ENCODE measurements at regions of chr4 and their contacts with region 1.

Region 1: GRCh38 chr4:22688236-22688635 is 4.5 kb upstream of the GBA3 start:
- DNase-seq: peak; percentile 43
- H3K4me3 ChIP-seq: no peak overlapping the region
- H3K27ac ChIP-seq: no peak overlapping the region
- H3K4me1 ChIP-seq: peaks cover 5% of the 10 kb centered on the region
- H3K27me3 ChIP-seq: no peaks in the 10 kb centered on the region
- CTCF ChIP-seq: no peak

Region 2: GRCh38 chr4:21780158-21780557 is 908.1 kb before region 1 on chr4:
- CTCF ChIA-PET with region 1: no interaction called
- dilution Hi-C with region 1: no loop called
- in situ Hi-C with region 1: loop called in 1 of 2 experiments (anchors 10 kb)
- intact Hi-C with region 1: no loop called
- DNase-seq: peak; percentile 40
- H3K4me3 ChIP-seq: no peak overlapping the region
- H3K27ac ChIP-seq: no peak overlapping the region
- H3K4me1 ChIP-seq: no peaks in the 10 kb centered on the region
- H3K27me3 ChIP-seq: no peaks in the 10 kb centered on the region
- CTCF ChIP-seq: no peak

Region 3: DNA sequence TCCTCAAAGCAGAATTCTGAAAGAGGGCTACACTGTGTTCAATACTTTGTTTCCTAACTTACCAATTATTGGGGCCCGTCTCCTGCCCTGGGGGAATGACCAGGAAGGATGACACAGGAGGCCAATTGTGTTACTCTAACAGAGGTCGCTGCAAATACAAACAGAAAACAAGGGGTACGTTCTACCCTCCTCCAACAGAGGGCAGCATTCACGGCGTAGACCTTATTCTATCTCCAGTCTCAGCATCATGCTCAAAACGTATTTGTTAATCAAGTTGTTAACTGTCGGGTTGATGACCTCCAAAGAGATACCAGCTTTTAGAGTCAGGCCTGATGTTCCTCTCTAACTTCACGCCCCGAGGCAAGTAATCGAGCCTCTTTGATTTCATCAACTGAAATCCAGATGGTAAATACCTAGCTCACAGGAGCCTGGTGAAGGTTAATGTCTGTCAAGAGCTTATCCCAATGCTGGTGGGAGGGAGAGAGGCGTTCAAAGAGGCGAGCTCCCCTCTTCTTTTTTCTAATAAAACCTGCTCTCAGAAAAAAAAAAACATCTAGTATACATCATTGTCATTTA is 558.7 kb before region 1 on chr4:
- CTCF ChIA-PET with region 1: no interaction called
- dilution Hi-C with region 1: no loop called
- in situ Hi-C with region 1: no loop called
- intact Hi-C with region 1: loop called (anchors 5 kb)
- DNase-seq: peak; percentile 41
- H3K4me3 ChIP-seq: no peak overlapping the region
- H3K27ac ChIP-seq: no peak overlapping the region
- H3K4me1 ChIP-seq: no peaks in the 10 kb centered on the region
- H3K27me3 ChIP-seq: no peaks in the 10 kb centered on the region
- CTCF ChIP-seq: peak; percentile 80 to 82

Region 4: GRCh38 chr4:22410645-22411247 is 277.5 kb before region 1 on chr4:
- CTCF ChIA-PET with region 1: no interaction called
- dilution Hi-C with region 1: no loop called
- in situ Hi-C with region 1: loop called (anchors 10 to 25 kb)
- intact Hi-C with region 1: loop called (anchors 1 kb)
- DNase-seq: no peak
- H3K4me3 ChIP-seq: no peak overlapping the region
- H3K27ac ChIP-seq: no peak overlapping the region
- H3K4me1 ChIP-seq: no peaks in the 10 kb centered on the region
- H3K27me3 ChIP-seq: no peaks in the 10 kb centered on the region
- CTCF ChIP-seq: peak; percentile 37 to 44

Region 5: DNA sequence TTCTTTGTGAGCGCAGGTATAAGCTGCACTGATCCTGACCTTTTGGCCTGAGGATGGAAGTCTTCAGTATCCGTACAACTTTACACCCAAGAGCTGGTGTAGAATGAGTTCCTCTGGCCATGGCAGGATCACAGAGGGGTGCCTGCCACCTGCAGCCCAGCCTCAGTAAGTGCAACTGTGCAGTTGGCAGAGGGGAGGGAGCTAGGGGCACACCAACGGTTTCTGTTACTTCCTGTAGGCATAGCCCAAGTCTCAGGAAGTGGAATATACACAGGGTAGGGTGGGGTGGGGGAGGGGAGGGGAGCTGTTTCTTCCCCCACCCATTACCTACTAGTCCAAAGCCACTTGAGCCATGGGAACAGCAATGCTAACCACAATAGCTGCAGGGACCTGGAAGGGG is 80.9 kb before region 1 on chr4:
- CTCF ChIA-PET with region 1: no interaction called
- dilution Hi-C with region 1: no loop called
- in situ Hi-C with region 1: no loop called
- intact Hi-C with region 1: loop called (anchors 1 kb)
- DNase-seq: peak; percentile 35
- H3K4me3 ChIP-seq: no peak overlapping the region
- H3K27ac ChIP-seq: no peak overlapping the region
- H3K4me1 ChIP-seq: no peaks in the 10 kb centered on the region
- H3K27me3 ChIP-seq: no peaks in the 10 kb centered on the region
- CTCF ChIP-seq: peak; percentile 68 to 89

Region 6: GRCh38 chr4:22634541-22635181 is 53.6 kb before region 1 on chr4:
- CTCF ChIA-PET with region 1: no interaction called
- dilution Hi-C with region 1: no loop called
- in situ Hi-C with region 1: no loop called
- intact Hi-C with region 1: loop called (anchors 2 kb)
- DNase-seq: peak; percentile 35
- H3K4me3 ChIP-seq: no peak overlapping the region
- H3K27ac ChIP-seq: no peak overlapping the region
- H3K4me1 ChIP-seq: no peaks in the 10 kb centered on the region
- H3K27me3 ChIP-seq: no peaks in the 10 kb centered on the region
- CTCF ChIP-seq: no peak

Measured in mammary epithelial cell (primary cell).